ENCODE measurements at regions of chr17 and their contacts with region 1.

Region 1: GRCh38 chr17:78250891-78251794 is 19.7 kb downstream of the TMEM235 start:
- DNase-seq: peak; percentile 88
- H3K4me3 Mint-ChIP-seq: peak overlapping the region; percentile 77
- H3K27ac Mint-ChIP-seq: peak overlapping the region; percentile 88
- H3K4me1 Mint-ChIP-seq: peaks cover 48% of the 10 kb centered on the region
- H3K27me3 Mint-ChIP-seq: no peaks in the 10 kb centered on the region

Region 2: DNA sequence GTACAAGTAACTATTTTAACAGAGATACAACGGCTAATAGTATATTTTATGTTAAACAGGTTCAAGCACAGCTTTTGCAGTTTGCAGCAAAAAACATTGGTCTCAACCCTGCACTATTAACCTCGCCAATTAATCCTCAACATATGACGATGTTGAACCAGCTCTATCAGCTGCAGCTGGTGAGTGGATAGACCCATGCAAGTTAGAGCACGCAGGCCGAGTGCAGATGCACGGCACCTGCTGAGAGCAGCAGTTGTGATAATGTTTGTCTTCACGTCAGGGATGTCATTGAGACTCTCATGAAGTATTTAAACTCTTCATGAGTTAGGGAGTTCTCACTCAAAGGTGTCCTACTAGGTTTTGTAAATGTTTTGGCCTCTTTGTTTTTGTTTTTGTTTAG is 168.2 kb before region 1 on chr17:
- CTCF ChIA-PET with region 1: interaction called, 18 read pairs
- POLR2A ChIA-PET with region 1: no interaction called
- DNase-seq: no peak
- H3K4me3 Mint-ChIP-seq: no peak overlapping the region
- H3K27ac Mint-ChIP-seq: no peak overlapping the region
- H3K4me1 Mint-ChIP-seq: peaks cover 10% of the 10 kb centered on the region
- H3K27me3 Mint-ChIP-seq: no peaks in the 10 kb centered on the region

Region 3: GRCh38 chr17:78226749-78227399 is 24.3 kb before region 1 on chr17:
- CTCF ChIA-PET with region 1: interaction called, 16 read pairs
- POLR2A ChIA-PET with region 1: interaction called, 5 read pairs
- DNase-seq: no peak
- H3K4me3 Mint-ChIP-seq: no peak overlapping the region
- H3K27ac Mint-ChIP-seq: no peak overlapping the region
- H3K4me1 Mint-ChIP-seq: peaks cover 11% of the 10 kb centered on the region
- H3K27me3 Mint-ChIP-seq: peaks cover 30% of the 10 kb centered on the region

Region 4: GRCh38 chr17:78237401-78238012 is 13.6 kb before region 1 on chr17:
- CTCF ChIA-PET with region 1: interaction called, 27 read pairs
- POLR2A ChIA-PET with region 1: no interaction called
- DNase-seq: no peak
- H3K4me3 Mint-ChIP-seq: no peak overlapping the region
- H3K27ac Mint-ChIP-seq: no peak overlapping the region
- H3K4me1 Mint-ChIP-seq: no peaks in the 10 kb centered on the region
- H3K27me3 Mint-ChIP-seq: peaks cover 11% of the 10 kb centered on the region

Region 5: DNA sequence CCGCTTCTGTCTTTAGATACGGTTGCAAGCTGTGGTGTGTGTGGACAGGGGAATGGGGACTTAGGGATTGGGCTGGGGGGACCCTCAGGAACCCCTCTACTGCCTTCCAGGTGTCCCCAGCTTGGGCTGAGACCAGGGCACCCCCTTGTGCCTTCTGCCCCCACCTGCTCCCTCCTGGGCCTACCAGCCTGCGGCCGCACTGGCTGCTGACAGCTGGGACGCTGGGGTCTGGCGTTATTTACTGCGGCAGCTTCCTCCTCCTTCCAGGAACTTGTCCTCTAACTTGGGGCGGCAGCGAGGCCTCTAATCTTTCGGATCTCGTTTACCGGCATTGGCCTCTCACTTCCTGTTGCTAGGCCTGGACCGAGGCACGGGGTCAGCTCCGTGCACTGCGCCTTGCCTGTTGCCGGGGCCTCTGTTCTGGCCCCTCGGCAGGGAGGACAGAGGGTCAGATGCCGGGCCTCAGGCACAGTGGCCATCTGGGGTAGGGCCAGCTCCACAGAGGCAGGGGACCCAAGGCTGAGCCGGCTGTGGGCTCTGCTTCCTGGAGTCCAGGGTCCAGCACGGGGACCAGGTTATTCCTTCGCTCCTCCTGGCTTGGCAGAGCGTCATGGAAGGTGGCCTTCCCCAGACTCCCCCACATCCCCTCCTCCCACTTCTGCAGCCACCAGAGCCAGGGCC is 12.1 kb after region 1 on chr17:
- CTCF ChIA-PET with region 1: interaction called, 11 read pairs
- POLR2A ChIA-PET with region 1: no interaction called
- DNase-seq: peak; percentile 48
- H3K4me3 Mint-ChIP-seq: peak overlapping the region; percentile 30
- H3K27ac Mint-ChIP-seq: peak overlapping the region; percentile 90
- H3K4me1 Mint-ChIP-seq: peaks cover 48% of the 10 kb centered on the region
- H3K27me3 Mint-ChIP-seq: no peaks in the 10 kb centered on the region

Region 6: DNA sequence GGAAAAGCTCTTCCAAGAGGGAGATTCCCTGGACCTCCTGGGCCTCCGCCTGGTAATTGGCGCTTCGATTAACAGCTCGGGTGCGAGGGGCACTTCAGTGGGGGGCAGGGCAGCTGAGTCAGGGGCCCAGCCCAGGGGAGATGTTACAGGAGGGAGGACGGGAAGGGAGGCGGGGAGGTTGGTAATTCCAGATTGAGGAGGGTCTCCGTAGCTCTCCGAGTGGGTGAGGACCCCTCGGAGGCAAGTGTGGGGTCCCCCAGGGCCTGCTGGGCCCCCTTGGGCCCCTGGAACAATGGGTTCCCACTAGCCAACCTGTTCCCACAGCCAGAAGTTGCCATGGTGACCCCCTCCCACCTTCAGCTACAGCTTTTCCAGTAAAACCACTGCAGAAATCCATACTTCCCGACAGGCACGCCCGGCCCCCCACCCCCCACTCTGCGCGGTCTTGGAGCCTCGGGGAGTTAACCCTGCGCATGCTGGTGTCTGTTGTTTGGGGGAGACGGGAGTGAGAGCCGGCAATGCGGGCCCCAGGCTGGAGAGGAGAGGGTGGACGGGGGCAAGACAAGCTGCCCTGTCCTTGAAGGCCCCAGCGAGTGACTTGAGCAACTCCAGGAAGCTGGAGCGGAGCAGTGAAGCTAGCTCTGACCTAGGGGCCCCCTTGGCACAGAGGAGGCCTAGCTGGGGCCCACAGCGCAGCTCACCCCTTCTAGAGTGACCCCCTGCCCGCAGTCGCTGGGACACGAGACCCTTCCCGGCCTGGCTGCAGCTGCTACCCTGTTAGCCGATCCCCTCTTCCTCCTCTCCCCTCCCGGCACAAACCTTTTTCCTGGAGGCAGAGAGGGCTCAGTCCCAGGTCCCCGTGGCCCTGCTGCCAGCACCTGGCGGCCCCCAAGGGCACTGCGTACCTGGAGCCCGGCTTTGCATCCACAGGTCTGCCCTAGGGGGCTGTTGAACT is 18.1 kb after region 1 on chr17:
- CTCF ChIA-PET with region 1: interaction called, 10 read pairs
- POLR2A ChIA-PET with region 1: no interaction called
- DNase-seq: no peak
- H3K4me3 Mint-ChIP-seq: no peak overlapping the region
- H3K27ac Mint-ChIP-seq: no peak overlapping the region
- H3K4me1 Mint-ChIP-seq: peaks cover 35% of the 10 kb centered on the region
- H3K27me3 Mint-ChIP-seq: peaks cover 2% of the 10 kb centered on the region

Region 7: GRCh38 chr17:78421484-78422266 is 170.5 kb after region 1 on chr17:
- CTCF ChIA-PET with region 1: interaction called, 15 read pairs
- POLR2A ChIA-PET with region 1: no interaction called
- DNase-seq: peak; percentile 75
- H3K4me3 Mint-ChIP-seq: no peak overlapping the region
- H3K27ac Mint-ChIP-seq: peak overlapping the region; percentile 55
- H3K4me1 Mint-ChIP-seq: peaks cover 41% of the 10 kb centered on the region
- H3K27me3 Mint-ChIP-seq: no peaks in the 10 kb centered on the region

Measured in activated CD4-positive, alpha-beta T cell treated with anti-CD3 and anti-CD28 coated beads, Interleukin-2, amount 10 ng/mL, durations not matched to agents 7 days and 5 days (primary cell).